Endothelial cell of umbilical vein (primary cell): ENCODE measurements at regions of chr10 and their contacts with region 1.

Region 1: GRCh38 chr10:95229724-95230627 is 35.9 kb downstream of the ACSM6 start:
- DNase-seq: peak; percentile 62
- H3K4me3 ChIP-seq: peak overlapping the region in 1 of 3 experiments; percentile 44
- H3K27ac ChIP-seq: peak overlapping the region; percentile 61
- H3K4me1 ChIP-seq: peaks cover 11% of the 10 kb centered on the region
- H3K27me3 ChIP-seq: no peaks in the 10 kb centered on the region
- CTCF ChIP-seq: no peak
- POLR2A ChIP-seq: no peak

Region 2: GRCh38 chr10:95183271-95184230 is 46.4 kb before region 1 on chr10:
- CTCF ChIA-PET with region 1: no interaction called
- POLR2A ChIA-PET with region 1: no interaction called
- dilution Hi-C with region 1: no loop called
- intact Hi-C with region 1: loop called (anchors 1 kb)
- DNase-seq: peak; percentile 80
- H3K4me3 ChIP-seq: peak overlapping the region; percentile 44 to 84 (median 80)
- H3K27ac ChIP-seq: peak overlapping the region; percentile 62
- H3K4me1 ChIP-seq: peaks cover 15% of the 10 kb centered on the region
- H3K27me3 ChIP-seq: peaks cover 0 to 10% of the 10 kb centered on the region in 2 experiments
- CTCF ChIP-seq: peak; percentile 96 to 99
- POLR2A ChIP-seq: peak; percentile 70